ENCODE measurements at regions of chr12 and their contacts with region 1.

Region 1: DNA sequence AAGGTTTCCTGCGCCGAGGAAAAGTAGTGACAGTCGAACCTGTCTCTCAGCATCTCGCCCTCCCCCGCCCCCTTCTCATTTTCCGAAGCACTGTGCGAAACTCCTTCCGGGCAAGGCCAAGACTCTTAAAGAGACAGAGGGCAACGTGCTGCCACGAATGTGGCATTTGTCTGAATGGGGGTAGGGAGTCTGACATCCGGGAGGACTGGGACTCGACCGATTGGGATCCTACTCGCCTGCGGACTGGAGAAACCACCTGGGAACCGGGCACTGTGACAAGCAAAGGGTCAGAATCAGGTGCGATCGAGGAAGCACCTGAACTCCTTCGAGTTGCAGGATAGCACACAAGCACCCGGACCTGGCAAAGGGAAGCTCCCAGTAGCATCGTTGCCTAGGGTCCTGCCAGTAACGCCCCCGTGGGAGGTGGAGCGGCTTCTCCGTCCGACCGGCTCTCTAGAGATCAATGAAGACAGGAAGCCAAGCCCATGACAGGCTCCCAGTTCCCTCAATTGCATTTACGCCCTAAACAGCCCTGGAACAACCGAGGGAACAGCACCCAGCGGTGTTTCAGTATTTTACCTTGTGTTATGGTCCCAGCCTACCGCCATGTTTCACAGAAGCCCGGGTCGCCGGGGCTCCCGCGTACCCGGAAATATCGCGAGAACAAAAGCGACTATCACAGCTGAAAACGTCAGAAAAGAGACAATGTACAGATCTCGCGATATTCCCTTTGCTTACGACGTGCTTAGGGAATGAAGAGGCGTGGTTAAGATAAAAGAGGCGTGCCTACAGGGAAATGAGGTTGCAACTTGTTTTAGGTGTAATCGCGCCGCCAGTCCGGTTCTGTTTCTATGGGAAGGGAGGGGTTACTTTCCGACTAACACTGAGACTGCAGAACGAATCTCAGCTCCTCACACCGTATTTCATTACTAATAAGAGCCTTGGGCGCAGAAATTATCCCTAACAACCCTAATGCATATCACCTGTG is at the start of gene ERGIC2:
- DNase-seq: peak; percentile 79 to 98 (median 86)
- ATAC-seq: peak; percentile 87
- H3K4me3 ChIP-seq: peak within 1 kb of the TSS; percentile 83
- H3K4me3 Mint-ChIP-seq: peak within 1 kb of the TSS; percentile 98
- H3K27ac ChIP-seq: peak within 1 kb of the TSS; percentile 94 to 96
- H3K27ac Mint-ChIP-seq: peak within 1 kb of the TSS; percentile 96
- H3K4me1 ChIP-seq: no peaks in the 10 kb centered on the region
- H3K4me1 Mint-ChIP-seq: peaks cover 43% of the 10 kb centered on the region
- H3K27me3 ChIP-seq: no peaks in the 10 kb centered on the region
- H3K27me3 Mint-ChIP-seq: no peaks in the 10 kb centered on the region
- CTCF ChIP-seq: no peak
- total RNA-seq, gene ERGIC2: 29.4 to 32.1 TPM

Region 2: DNA sequence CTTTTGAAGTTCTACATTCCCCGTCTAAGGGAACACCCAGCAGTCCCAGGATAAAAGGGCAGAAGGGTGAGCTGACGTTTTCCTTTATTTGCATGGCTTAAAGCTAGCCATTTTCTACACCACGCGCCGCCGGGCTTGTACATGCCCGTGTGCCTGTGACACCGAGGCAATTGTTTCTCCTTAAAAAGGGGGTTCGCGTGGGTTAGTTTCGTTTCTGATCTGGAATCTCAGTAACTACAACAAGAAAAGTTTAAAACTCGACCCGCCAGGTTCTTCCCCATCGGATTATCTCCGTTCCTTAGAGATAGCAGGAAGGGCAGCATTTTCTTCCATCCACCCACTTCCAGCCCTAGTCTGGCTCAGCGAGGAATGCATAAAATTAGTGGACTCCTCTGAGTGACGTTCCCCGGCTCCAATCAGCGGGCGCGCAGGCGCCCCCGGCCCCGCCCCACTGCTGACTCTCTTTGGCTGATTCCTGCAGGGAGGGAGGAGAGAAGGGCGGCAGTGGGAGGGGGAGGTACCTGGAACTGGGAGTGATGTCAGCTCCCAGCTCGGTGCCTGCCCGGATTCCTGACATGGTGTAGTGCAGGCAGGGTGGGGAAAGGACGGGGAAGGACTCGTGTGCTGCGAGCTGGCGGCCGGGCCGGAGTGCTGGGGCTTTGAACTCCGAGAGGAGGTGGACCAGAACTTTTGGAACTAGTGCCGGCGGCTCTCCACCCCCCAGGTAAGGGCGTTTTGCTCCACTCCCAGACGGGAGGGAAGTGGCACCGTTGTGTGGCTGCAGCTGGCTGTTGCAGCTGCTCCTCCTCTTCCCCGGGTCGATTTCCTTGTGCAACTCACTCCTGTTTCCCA is 1857.0 kb before region 1 on chr12 and contains the start of gene PPFIBP1:
- CTCF ChIA-PET with region 1: no interaction called
- POLR2A ChIA-PET with region 1: no interaction called
- intact Hi-C with region 1: loop called in 1 of 2 experiments (anchors 10 kb)
- DNase-seq: peak; percentile 94 to 100 (median 98)
- ATAC-seq: peak; percentile 95
- H3K4me3 ChIP-seq: peak within 1 kb of the TSS; percentile 75
- H3K4me3 Mint-ChIP-seq: peak within 1 kb of the TSS; percentile 99
- H3K27ac ChIP-seq: peak within 1 kb of the TSS; percentile 36 to 54
- H3K27ac Mint-ChIP-seq: peak within 1 kb of the TSS; percentile 96
- H3K4me1 ChIP-seq: peaks cover 16% of the 10 kb centered on the region
- H3K4me1 Mint-ChIP-seq: peaks cover 40% of the 10 kb centered on the region
- H3K27me3 ChIP-seq: no peaks in the 10 kb centered on the region
- H3K27me3 Mint-ChIP-seq: no peaks in the 10 kb centered on the region
- CTCF ChIP-seq: no peak
- total RNA-seq, gene PPFIBP1: 2.6 to 2.9 TPM

Region 3: DNA sequence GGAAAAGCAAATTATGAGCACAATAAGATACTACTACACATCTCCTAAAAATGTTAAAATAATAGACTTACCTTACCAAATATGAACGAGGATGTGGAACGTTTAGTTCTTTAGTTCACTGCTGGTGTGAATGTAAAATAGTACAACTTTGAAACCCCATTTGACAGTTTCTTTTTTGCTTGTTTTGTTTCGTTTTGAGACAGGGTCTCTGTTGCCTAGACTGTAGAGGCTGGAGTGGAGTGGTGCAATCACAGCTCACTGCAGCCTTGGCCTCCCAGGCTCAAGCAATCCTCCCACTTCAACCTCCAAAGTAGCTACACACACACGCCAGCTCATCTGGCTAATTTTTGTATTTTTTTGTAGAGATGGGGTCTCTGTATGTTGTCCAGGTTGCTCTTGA is 368.2 kb before region 1 on chr12:
- CTCF ChIA-PET with region 1: no interaction called
- POLR2A ChIA-PET with region 1: no interaction called
- intact Hi-C with region 1: no loop called
- DNase-seq: no peak
- ATAC-seq: no peak
- H3K4me3 ChIP-seq: no peak overlapping the region
- H3K4me3 Mint-ChIP-seq: no peak overlapping the region
- H3K27ac ChIP-seq: no peak overlapping the region
- H3K27ac Mint-ChIP-seq: no peak overlapping the region
- H3K4me1 ChIP-seq: no peaks in the 10 kb centered on the region
- H3K4me1 Mint-ChIP-seq: no peaks in the 10 kb centered on the region
- H3K27me3 ChIP-seq: no peaks in the 10 kb centered on the region
- H3K27me3 Mint-ChIP-seq: peaks cover 5% of the 10 kb centered on the region
- CTCF ChIP-seq: no peak

Region 4: GRCh38 chr12:29103539-29103974 is 277.3 kb before region 1 on chr12:
- CTCF ChIA-PET with region 1: no interaction called
- POLR2A ChIA-PET with region 1: interaction called, 3 read pairs
- intact Hi-C with region 1: loop called in 1 of 2 experiments (anchors 5 kb)
- DNase-seq: peak in 12 of 14 experiments; percentile 5 to 90 (median 32)
- ATAC-seq: peak; percentile 93
- H3K4me3 ChIP-seq: peak overlapping the region; percentile 41
- H3K4me3 Mint-ChIP-seq: peak overlapping the region; percentile 63
- H3K27ac ChIP-seq: peak overlapping the region; percentile 66 to 83
- H3K27ac Mint-ChIP-seq: peak overlapping the region; percentile 95
- H3K4me1 ChIP-seq: peaks cover 13% of the 10 kb centered on the region
- H3K4me1 Mint-ChIP-seq: peaks cover 37% of the 10 kb centered on the region
- H3K27me3 ChIP-seq: no peaks in the 10 kb centered on the region
- H3K27me3 Mint-ChIP-seq: no peaks in the 10 kb centered on the region
- CTCF ChIP-seq: no peak

Region 5: DNA sequence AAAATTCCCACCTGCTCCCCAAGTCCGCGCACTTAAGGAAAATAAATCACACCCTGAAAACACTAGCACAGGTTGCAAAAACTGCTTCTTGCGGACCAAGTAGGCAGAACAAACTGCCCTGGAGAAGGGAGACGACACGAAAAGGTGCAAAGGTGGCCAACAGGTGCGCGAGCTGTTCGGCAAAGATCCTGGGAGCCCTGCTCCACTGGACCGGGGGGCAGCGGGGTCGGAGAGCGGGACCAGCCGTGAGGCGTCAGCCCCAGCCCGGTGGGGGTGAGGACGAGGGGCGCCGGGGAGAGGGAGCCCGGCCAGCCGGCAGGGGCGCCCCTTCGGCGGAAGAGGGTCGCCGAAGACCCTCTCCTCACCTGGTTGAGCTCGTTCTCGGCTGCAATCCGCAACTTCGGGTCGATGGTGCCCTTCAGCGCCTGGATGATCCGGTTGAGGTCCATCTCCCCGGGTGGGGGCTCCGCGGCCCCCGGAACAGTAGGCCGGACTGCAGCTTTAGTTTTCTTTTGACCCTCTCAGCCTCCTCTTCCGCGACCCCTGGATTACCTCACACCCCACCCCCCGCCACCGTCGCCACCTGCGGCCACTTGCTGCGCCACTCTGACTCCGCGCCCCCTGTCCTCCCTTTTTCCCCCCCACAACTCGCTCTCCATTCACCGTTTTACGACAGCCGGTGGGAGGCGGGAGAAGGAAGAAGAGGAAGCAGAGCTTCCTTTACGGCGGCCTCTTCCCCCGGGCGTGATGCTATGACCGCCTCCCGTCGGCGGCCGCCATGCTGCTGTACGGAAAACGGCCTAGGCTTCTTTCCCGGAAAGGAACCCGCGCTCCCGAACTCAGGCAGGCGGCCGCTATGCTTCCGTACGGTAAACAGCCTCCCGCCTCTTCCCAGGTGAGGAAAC is 1314.6 kb after region 1 on chr12 and contains the start of gene IPO8:
- CTCF ChIA-PET with region 1: no interaction called
- POLR2A ChIA-PET with region 1: interaction called, 3 read pairs
- intact Hi-C with region 1: loop called in 1 of 2 experiments (anchors 2 kb)
- DNase-seq: peak; percentile 69 to 93 (median 82)
- ATAC-seq: peak; percentile 94
- H3K4me3 ChIP-seq: peak within 1 kb of the TSS; percentile 90
- H3K4me3 Mint-ChIP-seq: peak within 1 kb of the TSS; percentile 100
- H3K27ac ChIP-seq: peak within 1 kb of the TSS; percentile 61 to 64
- H3K27ac Mint-ChIP-seq: peak within 1 kb of the TSS; percentile 90
- H3K4me1 ChIP-seq: peaks cover 30% of the 10 kb centered on the region
- H3K4me1 Mint-ChIP-seq: peaks cover 54% of the 10 kb centered on the region
- H3K27me3 ChIP-seq: no peaks in the 10 kb centered on the region
- H3K27me3 Mint-ChIP-seq: no peaks in the 10 kb centered on the region
- CTCF ChIP-seq: peak; percentile 56
- total RNA-seq, gene IPO8: 17.2 to 17.5 TPM

Region 6: GRCh38 chr12:31325877-31326631 is 1945.2 kb after region 1 on chr12 and contains the start of gene SINHCAF:
- CTCF ChIA-PET with region 1: no interaction called
- POLR2A ChIA-PET with region 1: interaction called, 3 read pairs
- intact Hi-C with region 1: loop called (anchors 5 to 10 kb)
- DNase-seq: peak; percentile 96 to 100 (median 99)
- ATAC-seq: peak; percentile 52
- H3K4me3 ChIP-seq: peak within 1 kb of the TSS; percentile 99
- H3K4me3 Mint-ChIP-seq: peak within 1 kb of the TSS; percentile 92
- H3K27ac ChIP-seq: peak within 1 kb of the TSS; percentile 77 to 95
- H3K27ac Mint-ChIP-seq: peak within 1 kb of the TSS; percentile 85
- H3K4me1 ChIP-seq: peaks cover 27% of the 10 kb centered on the region
- H3K4me1 Mint-ChIP-seq: peaks cover 32% of the 10 kb centered on the region
- H3K27me3 ChIP-seq: no peaks in the 10 kb centered on the region
- H3K27me3 Mint-ChIP-seq: no peaks in the 10 kb centered on the region
- CTCF ChIP-seq: no peak
- total RNA-seq, gene SINHCAF: 103 to 119 TPM

Measured in CD4-positive, alpha-beta T cell (primary cell).